ENCODE measurements at regions of chr12 and their contacts with region 1.

Region 1: GRCh38 chr12:116142936-116143898 is 134.3 kb downstream of the MED13L start:
- DNase-seq: peak; percentile 96
- H3K4me3 ChIP-seq: peak overlapping the region; percentile 2
- H3K27ac ChIP-seq: peak overlapping the region; percentile 84
- H3K4me1 ChIP-seq: peaks cover 55% of the 10 kb centered on the region
- H3K27me3 ChIP-seq: no peaks in the 10 kb centered on the region
- CTCF ChIP-seq: no peak

Region 2: GRCh38 chr12:116015525-116015924 is 127.7 kb before region 1 on chr12:
- CTCF ChIA-PET with region 1: no interaction called
- POLR2A ChIA-PET with region 1: no interaction called
- intact Hi-C with region 1: loop called (anchors 5 kb)
- DNase-seq: peak; percentile 65
- H3K4me3 ChIP-seq: no peak overlapping the region
- H3K27ac ChIP-seq: no peak overlapping the region
- H3K4me1 ChIP-seq: peaks cover 7% of the 10 kb centered on the region
- H3K27me3 ChIP-seq: no peaks in the 10 kb centered on the region
- CTCF ChIP-seq: peak; percentile 65

Region 3: DNA sequence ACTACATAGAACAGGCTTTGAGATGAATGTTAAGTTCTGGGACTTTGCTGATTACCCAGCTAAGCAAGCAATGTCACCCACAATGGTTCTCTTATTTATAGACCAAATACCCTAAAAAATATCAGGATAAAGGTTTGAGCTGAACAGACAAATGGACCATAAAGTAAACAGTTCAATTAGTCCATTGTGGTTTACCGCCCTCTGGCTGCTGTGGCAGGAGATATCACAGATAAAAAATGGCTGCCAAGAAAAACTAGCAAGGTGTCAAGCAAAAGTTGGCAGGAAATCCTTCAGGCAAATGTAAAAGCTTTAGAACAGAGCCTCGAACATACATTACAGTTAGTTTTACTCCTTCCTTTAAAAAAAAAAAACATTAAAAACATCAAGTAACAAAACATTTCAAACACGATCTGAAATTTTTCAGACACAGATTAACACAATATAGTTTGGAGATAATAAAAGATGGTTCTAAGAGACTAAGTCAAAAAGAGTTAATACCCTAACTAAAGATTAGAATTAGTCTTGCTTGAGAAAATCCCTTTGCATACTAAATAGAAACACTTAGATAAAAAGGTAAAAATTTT is 93.0 kb after region 1 on chr12:
- CTCF ChIA-PET with region 1: no interaction called
- POLR2A ChIA-PET with region 1: no interaction called
- intact Hi-C with region 1: loop called (anchors 5 kb)
- DNase-seq: peak; percentile 76
- H3K4me3 ChIP-seq: no peak overlapping the region
- H3K27ac ChIP-seq: no peak overlapping the region
- H3K4me1 ChIP-seq: peaks cover 34% of the 10 kb centered on the region
- H3K27me3 ChIP-seq: no peaks in the 10 kb centered on the region
- CTCF ChIP-seq: peak; percentile 87

Region 4: DNA sequence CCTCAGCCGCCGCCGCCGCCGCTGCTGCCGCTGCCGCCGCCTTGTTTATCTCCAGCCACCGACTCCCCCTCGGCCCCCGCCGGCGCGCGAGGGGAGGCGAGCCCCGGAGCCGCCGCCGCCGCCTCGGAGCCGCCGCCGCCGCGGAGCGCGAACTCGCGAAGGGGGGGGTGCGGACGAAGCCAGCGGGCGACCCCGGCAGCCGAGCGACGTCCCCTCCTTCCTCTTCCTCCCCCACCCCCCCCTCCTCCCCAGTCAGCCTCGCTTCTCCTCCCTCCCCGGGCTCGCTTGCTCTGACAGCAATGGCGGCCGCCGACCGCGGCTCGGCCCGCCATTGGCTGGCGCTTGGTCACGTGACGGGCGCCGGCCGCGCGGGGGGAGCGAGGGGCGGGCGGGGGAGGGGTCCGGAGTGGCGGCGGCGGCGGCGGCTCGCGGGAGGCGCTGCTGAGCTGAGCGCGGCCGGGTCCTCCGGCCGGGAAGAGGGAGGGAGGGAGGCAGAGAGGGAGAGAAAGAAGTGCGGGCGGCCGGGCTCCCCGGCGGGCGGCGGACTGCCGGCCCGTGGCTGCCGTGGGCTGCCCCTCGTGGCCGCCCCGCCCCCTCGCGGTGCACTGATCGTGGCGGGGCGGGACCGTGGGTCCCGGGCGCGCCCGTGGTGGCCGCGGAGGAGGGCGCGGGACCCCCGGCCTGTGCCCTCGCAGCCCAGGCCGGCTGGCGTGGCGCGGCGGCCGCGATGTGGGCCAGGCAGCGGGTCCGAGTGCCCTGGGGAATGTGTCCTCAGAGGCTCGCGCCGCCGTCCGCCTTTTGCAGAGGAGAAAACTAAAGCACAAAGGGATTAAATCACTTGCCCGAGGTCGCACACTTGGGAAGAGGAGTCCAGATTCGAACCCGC is 134.4 kb after region 1 on chr12 and contains the start of gene MED13L:
- CTCF ChIA-PET with region 1: no interaction called
- POLR2A ChIA-PET with region 1: no interaction called
- intact Hi-C with region 1: loop called (anchors 5 kb)
- DNase-seq: peak; percentile 94
- H3K4me3 ChIP-seq: peak within 1 kb of the TSS; percentile 67
- H3K27ac ChIP-seq: peak within 1 kb of the TSS; percentile 82
- H3K4me1 ChIP-seq: peaks cover 24% of the 10 kb centered on the region
- H3K27me3 ChIP-seq: no peaks in the 10 kb centered on the region
- CTCF ChIP-seq: 0 out of 2 replicates have a peak, but pooled peaks have one; percentile 18
- total RNA-seq, gene MED13L: 88.0 and 94.1 TPM in 2 replicates

Region 5: GRCh38 chr12:116533343-116534251 is 390.4 kb after region 1 on chr12:
- CTCF ChIA-PET with region 1: no interaction called
- POLR2A ChIA-PET with region 1: no interaction called
- intact Hi-C with region 1: loop called (anchors 10 kb)
- DNase-seq: peak; percentile 92
- H3K4me3 ChIP-seq: peak overlapping the region; percentile 72
- H3K27ac ChIP-seq: peak overlapping the region; percentile 68
- H3K4me1 ChIP-seq: peaks cover 5% of the 10 kb centered on the region
- H3K27me3 ChIP-seq: no peaks in the 10 kb centered on the region
- CTCF ChIP-seq: no peak

Region 6: GRCh38 chr12:116599285-116600136 is 456.3 kb after region 1 on chr12:
- CTCF ChIA-PET with region 1: interaction called, 5 read pairs
- POLR2A ChIA-PET with region 1: no interaction called
- intact Hi-C with region 1: loop called (anchors 5 kb)
- DNase-seq: peak; percentile 83
- H3K4me3 ChIP-seq: no peak overlapping the region
- H3K27ac ChIP-seq: no peak overlapping the region
- H3K4me1 ChIP-seq: peaks cover 37% of the 10 kb centered on the region
- H3K27me3 ChIP-seq: no peaks in the 10 kb centered on the region
- CTCF ChIP-seq: peak; percentile 63

Region 7: DNA sequence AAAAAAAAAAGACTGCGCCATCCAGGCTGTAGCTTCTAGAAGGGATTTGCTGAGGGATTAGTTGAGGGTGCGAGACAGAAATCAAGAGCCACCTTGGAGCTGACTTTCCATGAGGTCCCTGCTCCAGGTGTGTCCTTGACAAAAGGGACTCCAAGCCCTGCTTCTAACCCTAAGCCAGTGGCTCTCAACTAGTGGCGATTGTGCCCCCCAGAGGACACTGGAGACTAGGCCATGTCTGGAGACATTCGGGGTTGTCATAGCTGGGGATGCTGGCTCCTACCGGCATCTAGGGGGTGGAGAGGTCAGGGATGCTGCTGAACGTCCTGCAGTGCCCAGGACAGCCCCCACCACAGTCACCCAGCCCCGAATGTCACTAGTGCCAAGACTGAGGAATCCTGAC is 554.1 kb after region 1 on chr12:
- CTCF ChIA-PET with region 1: interaction called, 3 read pairs
- POLR2A ChIA-PET with region 1: no interaction called
- intact Hi-C with region 1: loop called (anchors 5 kb)
- DNase-seq: peak; percentile 53
- H3K4me3 ChIP-seq: no peak overlapping the region
- H3K27ac ChIP-seq: no peak overlapping the region
- H3K4me1 ChIP-seq: peaks cover 14% of the 10 kb centered on the region
- H3K27me3 ChIP-seq: no peaks in the 10 kb centered on the region
- CTCF ChIP-seq: peak; percentile 44